Activated B cell treated with CpG ODN at 0.5 μM for 24 hours (primary cell): ENCODE measurements at regions of chr2 and their contacts with region 1.

Region 1: GRCh38 chr2:127479219-127479825 is 47.0 kb downstream of the IWS1 start:
- DNase-seq: no peak
- ATAC-seq: no peak
- H3K4me3 Mint-ChIP-seq: no peak overlapping the region
- H3K27ac Mint-ChIP-seq: no peak overlapping the region
- H3K4me1 Mint-ChIP-seq: no peaks in the 10 kb centered on the region
- H3K27me3 Mint-ChIP-seq: no peaks in the 10 kb centered on the region
- CTCF ChIP-seq: no peak

Region 2: DNA sequence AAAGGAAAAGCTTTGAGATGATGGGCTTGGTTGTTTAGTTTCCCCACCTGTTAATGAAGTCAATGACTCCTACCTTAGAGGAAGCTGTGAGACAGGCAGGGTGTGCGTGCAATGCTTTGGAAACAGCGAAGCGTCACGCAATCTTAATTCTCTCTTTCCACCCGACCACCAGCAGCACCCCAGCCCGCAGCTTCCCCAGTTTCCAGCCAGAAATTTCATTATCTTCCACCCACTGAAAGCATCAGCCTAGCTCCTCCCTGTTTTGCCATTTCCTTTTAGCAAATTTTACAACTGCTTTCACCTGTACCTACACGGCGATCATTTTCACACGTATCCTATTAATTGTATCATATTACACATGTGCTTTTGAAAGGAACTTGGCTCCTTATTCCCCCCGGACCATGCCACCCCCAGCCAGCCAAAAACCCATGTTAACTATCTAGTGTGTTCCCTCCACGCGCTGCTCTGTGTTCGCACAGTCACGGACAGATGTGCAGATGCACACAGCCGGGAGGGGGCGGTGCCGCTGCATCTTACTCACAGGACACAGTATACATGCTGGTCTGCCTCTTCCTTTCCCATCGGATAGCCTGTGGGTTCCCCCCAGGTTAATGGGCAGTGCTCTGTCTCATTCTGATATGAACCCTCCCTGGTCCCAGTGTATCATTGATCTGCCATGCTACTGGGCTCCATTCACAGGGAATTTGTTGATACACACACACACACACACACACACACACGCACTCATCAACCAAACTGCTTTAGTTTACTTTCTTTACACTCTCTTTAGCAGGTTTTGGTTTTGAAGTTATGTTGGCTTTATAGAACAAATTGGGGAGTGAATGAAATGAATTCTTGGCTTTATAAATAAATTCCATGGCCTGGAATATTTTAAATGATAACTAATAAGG is 281.6 kb before region 1 on chr2:
- CTCF ChIA-PET with region 1: interaction called, 24 read pairs
- POLR2A ChIA-PET with region 1: no interaction called
- intact Hi-C with region 1: loop called (anchors 1 kb)
- DNase-seq: no peak
- ATAC-seq: peak; percentile 86
- H3K4me3 Mint-ChIP-seq: peak overlapping the region; percentile 49
- H3K27ac Mint-ChIP-seq: no peak overlapping the region
- H3K4me1 Mint-ChIP-seq: peaks cover 5% of the 10 kb centered on the region
- H3K27me3 Mint-ChIP-seq: no peaks in the 10 kb centered on the region
- CTCF ChIP-seq: no peak

Region 3: GRCh38 chr2:127293748-127294562 is 185.4 kb before region 1 on chr2 and contains the start of gene ERCC3:
- CTCF ChIA-PET with region 1: interaction called, 10 read pairs
- POLR2A ChIA-PET with region 1: no interaction called
- intact Hi-C with region 1: no loop called
- DNase-seq: peak; percentile 78
- ATAC-seq: peak; percentile 98
- H3K4me3 Mint-ChIP-seq: peak within 1 kb of the TSS; percentile 97
- H3K27ac Mint-ChIP-seq: peak within 1 kb of the TSS; percentile 95
- H3K4me1 Mint-ChIP-seq: peaks cover 25% of the 10 kb centered on the region
- H3K27me3 Mint-ChIP-seq: no peaks in the 10 kb centered on the region
- CTCF ChIP-seq: no peak
- total RNA-seq, gene ERCC3: 55.9 and 65.6 TPM in 2 replicates

Region 4: GRCh38 chr2:127324635-127325034 is 154.7 kb before region 1 on chr2:
- CTCF ChIA-PET with region 1: interaction called, 59 read pairs
- POLR2A ChIA-PET with region 1: no interaction called
- intact Hi-C with region 1: loop called (anchors 1 kb)
- DNase-seq: no peak
- ATAC-seq: no peak
- H3K4me3 Mint-ChIP-seq: no peak overlapping the region
- H3K27ac Mint-ChIP-seq: no peak overlapping the region
- H3K4me1 Mint-ChIP-seq: no peaks in the 10 kb centered on the region
- H3K27me3 Mint-ChIP-seq: no peaks in the 10 kb centered on the region
- CTCF ChIP-seq: no peak

Region 5: GRCh38 chr2:127355386-127356008 is 123.8 kb before region 1 on chr2:
- CTCF ChIA-PET with region 1: interaction called, 19 read pairs
- POLR2A ChIA-PET with region 1: interaction called, 6 read pairs
- intact Hi-C with region 1: loop called (anchors 1 kb)
- DNase-seq: no peak
- ATAC-seq: peak; percentile 47
- H3K4me3 Mint-ChIP-seq: no peak overlapping the region
- H3K27ac Mint-ChIP-seq: no peak overlapping the region
- H3K4me1 Mint-ChIP-seq: peaks cover 58% of the 10 kb centered on the region
- H3K27me3 Mint-ChIP-seq: no peaks in the 10 kb centered on the region
- CTCF ChIP-seq: peak; percentile 54

Region 6: GRCh38 chr2:127422810-127423475 is 56.4 kb before region 1 on chr2:
- CTCF ChIA-PET with region 1: interaction called, 10 read pairs
- POLR2A ChIA-PET with region 1: no interaction called
- intact Hi-C with region 1: loop called (anchors 5 kb)
- DNase-seq: peak; percentile 43
- ATAC-seq: peak; percentile 88
- H3K4me3 Mint-ChIP-seq: peak overlapping the region; percentile 80
- H3K27ac Mint-ChIP-seq: no peak overlapping the region
- H3K4me1 Mint-ChIP-seq: peaks cover 16% of the 10 kb centered on the region
- H3K27me3 Mint-ChIP-seq: peaks cover 1% of the 10 kb centered on the region
- CTCF ChIP-seq: no peak